ENCODE measurements at regions of chr6 and their contacts with region 1.

Region 1: DNA sequence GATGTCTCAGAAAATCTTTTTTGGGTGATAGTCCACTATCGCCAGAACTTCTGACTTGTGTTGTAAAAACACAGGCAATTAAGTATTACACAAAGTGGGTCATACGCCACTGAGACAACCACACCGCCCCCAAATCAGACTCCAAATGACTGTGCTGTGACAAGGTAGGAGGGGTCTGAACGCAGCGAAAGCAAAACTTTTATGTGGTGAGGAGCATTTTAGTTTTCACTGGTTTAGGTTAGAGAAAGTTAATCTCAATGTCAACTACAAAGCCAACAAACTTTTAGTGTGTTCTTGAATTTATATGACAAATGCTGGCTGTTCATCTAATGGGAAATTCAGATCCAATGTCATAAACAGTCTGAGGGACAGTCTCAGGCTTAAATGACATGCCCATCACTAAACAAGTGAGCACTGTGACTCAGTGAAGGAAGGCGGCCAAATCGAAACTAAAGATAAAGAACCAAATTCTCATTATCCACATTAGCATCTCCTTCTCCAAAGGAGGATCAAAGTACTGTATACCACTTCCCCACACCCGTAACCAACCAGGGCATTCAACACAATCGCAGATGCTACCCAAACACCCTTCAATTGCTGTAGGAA is 186.7 kb downstream of the GJA10 start:
- DNase-seq: peak; percentile 94
- H3K4me3 Mint-ChIP-seq: peak overlapping the region; percentile 86
- H3K27ac Mint-ChIP-seq: peak overlapping the region; percentile 92
- H3K4me1 Mint-ChIP-seq: peaks cover 91% of the 10 kb centered on the region
- H3K27me3 Mint-ChIP-seq: no peaks in the 10 kb centered on the region

Region 2: DNA sequence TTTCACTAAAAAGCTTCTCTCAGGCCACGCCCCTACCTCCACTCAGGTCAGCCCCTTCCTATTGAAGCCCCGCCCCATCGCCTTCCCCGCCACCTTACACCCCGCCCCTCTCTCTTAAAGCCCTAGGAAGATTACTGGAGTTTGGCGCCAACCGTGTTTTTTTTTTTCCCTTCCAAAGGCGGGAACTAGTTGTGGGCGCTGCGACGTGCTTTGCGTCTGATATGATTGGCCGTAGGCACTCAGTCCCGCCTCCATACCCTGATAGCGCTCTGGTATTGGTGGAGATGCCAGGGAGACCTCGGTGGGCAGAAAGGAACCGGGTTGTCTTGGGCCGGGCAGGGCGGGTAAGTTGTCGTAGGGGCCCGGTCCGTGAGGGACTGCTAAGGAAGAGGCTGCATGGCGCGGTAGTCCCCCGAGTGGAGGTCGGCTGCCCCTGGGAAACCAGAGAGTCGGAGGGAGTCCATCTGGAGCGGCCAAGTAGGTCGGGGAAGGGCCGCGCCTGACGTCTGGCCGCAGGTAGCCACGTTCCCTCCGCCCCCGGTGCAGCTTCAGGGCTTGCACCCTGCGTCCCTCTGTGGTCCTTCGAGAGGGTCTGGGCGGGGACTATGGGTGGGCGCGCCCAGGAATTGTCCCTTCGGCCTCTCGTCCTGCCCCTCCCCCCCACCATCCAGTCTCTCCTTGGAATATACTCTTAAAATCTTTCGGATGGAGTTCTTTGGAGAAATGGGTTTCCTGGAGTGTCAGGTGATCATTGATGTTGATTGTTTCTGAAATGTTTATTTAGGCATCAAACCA is 251.2 kb before region 1 on chr6 and contains the start of gene CASP8AP2:
- CTCF ChIA-PET with region 1: no interaction called
- POLR2A ChIA-PET with region 1: no interaction called
- intact Hi-C with region 1: loop called (anchors 2 kb)
- DNase-seq: peak; percentile 98
- H3K4me3 Mint-ChIP-seq: peak within 1 kb of the TSS; percentile 99
- H3K27ac Mint-ChIP-seq: peak within 1 kb of the TSS; percentile 95
- H3K4me1 Mint-ChIP-seq: peaks cover 34% of the 10 kb centered on the region
- H3K27me3 Mint-ChIP-seq: no peaks in the 10 kb centered on the region
- total RNA-seq, gene CASP8AP2: 32.4 to 34.2 TPM

Region 3: GRCh38 chr6:90008908-90009501 is 72.0 kb before region 1 on chr6:
- CTCF ChIA-PET with region 1: no interaction called
- POLR2A ChIA-PET with region 1: interaction called, 3 read pairs
- intact Hi-C with region 1: loop called (anchors 1 kb)
- DNase-seq: peak; percentile 54
- H3K4me3 Mint-ChIP-seq: peak overlapping the region; percentile 12
- H3K27ac Mint-ChIP-seq: peak overlapping the region; percentile 94
- H3K4me1 Mint-ChIP-seq: peaks cover 48% of the 10 kb centered on the region
- H3K27me3 Mint-ChIP-seq: no peaks in the 10 kb centered on the region

Region 4: GRCh38 chr6:90103056-90103800 is 22.2 kb after region 1 on chr6:
- CTCF ChIA-PET with region 1: no interaction called
- POLR2A ChIA-PET with region 1: no interaction called
- intact Hi-C with region 1: loop called (anchors 1 kb)
- DNase-seq: peak; percentile 66
- H3K4me3 Mint-ChIP-seq: peak overlapping the region; percentile 39
- H3K27ac Mint-ChIP-seq: peak overlapping the region; percentile 63
- H3K4me1 Mint-ChIP-seq: peaks cover 67% of the 10 kb centered on the region
- H3K27me3 Mint-ChIP-seq: peaks cover 5% of the 10 kb centered on the region

Region 5: DNA sequence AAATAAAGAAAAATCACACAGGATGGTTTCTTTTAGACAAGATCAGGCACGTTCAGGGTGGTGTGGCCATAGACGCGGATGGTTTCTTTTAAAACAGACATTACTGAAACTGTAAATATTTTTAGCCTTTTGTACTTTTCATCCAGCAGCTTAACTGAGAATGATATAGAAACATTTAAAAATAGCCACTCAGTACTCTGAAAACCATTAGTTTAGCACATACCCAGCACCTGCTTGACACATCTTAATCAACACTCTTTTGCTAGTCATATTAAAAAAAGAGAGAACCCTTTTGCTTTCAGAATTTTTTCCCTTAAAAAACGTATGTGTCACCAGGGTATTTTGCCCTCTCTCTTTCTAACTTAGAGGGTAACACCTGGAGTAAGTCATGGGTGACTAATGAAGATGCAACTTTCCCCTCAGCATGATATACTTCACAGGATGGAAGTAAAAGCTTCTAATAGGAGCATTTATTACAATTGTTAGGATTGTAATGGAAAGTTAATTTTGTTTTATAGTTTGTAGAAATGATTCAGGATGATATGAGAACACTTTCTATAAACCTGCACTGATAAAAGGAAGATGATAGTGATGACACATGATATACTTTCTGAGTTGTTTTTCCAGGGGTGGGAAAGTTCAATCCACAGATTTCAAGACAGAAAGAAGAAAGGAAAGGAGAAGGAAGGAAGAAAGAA is 170.5 kb after region 1 on chr6:
- CTCF ChIA-PET with region 1: no interaction called
- POLR2A ChIA-PET with region 1: interaction called, 5 read pairs
- intact Hi-C with region 1: loop called (anchors 1 kb)
- DNase-seq: no peak
- H3K4me3 Mint-ChIP-seq: no peak overlapping the region
- H3K27ac Mint-ChIP-seq: peak overlapping the region; percentile 83
- H3K4me1 Mint-ChIP-seq: peaks cover 80% of the 10 kb centered on the region
- H3K27me3 Mint-ChIP-seq: no peaks in the 10 kb centered on the region

Region 6: GRCh38 chr6:90458353-90459224 is 377.6 kb after region 1 on chr6:
- CTCF ChIA-PET with region 1: no interaction called
- POLR2A ChIA-PET with region 1: no interaction called
- intact Hi-C with region 1: loop called (anchors 1 kb)
- DNase-seq: peak; percentile 94
- H3K4me3 Mint-ChIP-seq: peak overlapping the region; percentile 40
- H3K27ac Mint-ChIP-seq: peak overlapping the region; percentile 95
- H3K4me1 Mint-ChIP-seq: peaks cover 87% of the 10 kb centered on the region
- H3K27me3 Mint-ChIP-seq: no peaks in the 10 kb centered on the region

Measured in activated CD4-positive, alpha-beta memory T cell treated with anti-CD3 and anti-CD28 coated beads for 36 hours (primary cell).